Sigmoid colon (tissue), 7 donors: ENCODE measurements at regions of chr1 and their contacts with region 1.

Region 1: GRCh38 chr1:45303582-45304310 is 22.9 kb upstream of the HPDL start:
- DNase-seq: peak; percentile 99
- H3K4me3 ChIP-seq: peak overlapping the region; percentile 52 to 88 (median 72)
- H3K27ac ChIP-seq: peak overlapping the region; percentile 91 to 96 (median 92)
- H3K4me1 ChIP-seq: peaks cover 0 to 17% (median 11%) of the 10 kb centered on the region in 4 donors
- H3K27me3 ChIP-seq: no peaks in the 10 kb centered on the region
- CTCF ChIP-seq: peak; percentile 46 to 87 (median 70)
- EP300 ChIP-seq: no peak
- POLR2A ChIP-seq: peak in 1 of 2 donors; percentile 58

Region 2: GRCh38 chr1:44714944-44715571 is 588.7 kb before region 1 on chr1:
- intact Hi-C with region 1: loop called (anchors 10 kb)
- DNase-seq: peak; percentile 74
- H3K4me3 ChIP-seq: no peak overlapping the region
- H3K27ac ChIP-seq: no peak overlapping the region
- H3K4me1 ChIP-seq: peaks cover 0 to 7% (median 5%) of the 10 kb centered on the region in 4 donors
- H3K27me3 ChIP-seq: no peaks in the 10 kb centered on the region
- CTCF ChIP-seq: peak; percentile 53 to 91 (median 78)
- EP300 ChIP-seq: no peak
- POLR2A ChIP-seq: no peak

Region 3: GRCh38 chr1:44730741-44731512 is 572.8 kb before region 1 on chr1 and contains the start of gene RNU5D-1:
- intact Hi-C with region 1: loop called (anchors 5 kb)
- DNase-seq: peak; percentile 96
- H3K4me3 ChIP-seq: peak within 1 kb of the TSS in 3 of 4 donors; percentile 13 to 20 (median 14)
- H3K27ac ChIP-seq: peak within 1 kb of the TSS; percentile 77 to 88 (median 82)
- H3K4me1 ChIP-seq: peaks cover 0 to 8% (median 4%) of the 10 kb centered on the region in 4 donors
- H3K27me3 ChIP-seq: no peaks in the 10 kb centered on the region
- CTCF ChIP-seq: peak; percentile 39 to 85 (median 68)
- EP300 ChIP-seq: peak in 2 of 4 donors; percentile 10 to 20
- POLR2A ChIP-seq: peak; percentile 95
- total RNA-seq, gene RNU5D-1: not detected

Region 4: GRCh38 chr1:44842862-44843655 is 460.7 kb before region 1 on chr1 and contains the start of gene PTCH2:
- intact Hi-C with region 1: loop called (anchors 5 kb)
- DNase-seq: peak; percentile 93
- H3K4me3 ChIP-seq: peak within 1 kb of the TSS; percentile 54 to 77 (median 60)
- H3K27ac ChIP-seq: peak within 1 kb of the TSS; percentile 66 to 82 (median 76)
- H3K4me1 ChIP-seq: peaks cover 0 to 18% (median 6%) of the 10 kb centered on the region in 4 donors
- H3K27me3 ChIP-seq: no peaks in the 10 kb centered on the region
- CTCF ChIP-seq: no peak
- EP300 ChIP-seq: no peak
- POLR2A ChIP-seq: peak in 1 of 2 donors; percentile 17
- total RNA-seq, gene PTCH2: 0.36 to 2.8 (median 0.83) TPM

Region 5: DNA sequence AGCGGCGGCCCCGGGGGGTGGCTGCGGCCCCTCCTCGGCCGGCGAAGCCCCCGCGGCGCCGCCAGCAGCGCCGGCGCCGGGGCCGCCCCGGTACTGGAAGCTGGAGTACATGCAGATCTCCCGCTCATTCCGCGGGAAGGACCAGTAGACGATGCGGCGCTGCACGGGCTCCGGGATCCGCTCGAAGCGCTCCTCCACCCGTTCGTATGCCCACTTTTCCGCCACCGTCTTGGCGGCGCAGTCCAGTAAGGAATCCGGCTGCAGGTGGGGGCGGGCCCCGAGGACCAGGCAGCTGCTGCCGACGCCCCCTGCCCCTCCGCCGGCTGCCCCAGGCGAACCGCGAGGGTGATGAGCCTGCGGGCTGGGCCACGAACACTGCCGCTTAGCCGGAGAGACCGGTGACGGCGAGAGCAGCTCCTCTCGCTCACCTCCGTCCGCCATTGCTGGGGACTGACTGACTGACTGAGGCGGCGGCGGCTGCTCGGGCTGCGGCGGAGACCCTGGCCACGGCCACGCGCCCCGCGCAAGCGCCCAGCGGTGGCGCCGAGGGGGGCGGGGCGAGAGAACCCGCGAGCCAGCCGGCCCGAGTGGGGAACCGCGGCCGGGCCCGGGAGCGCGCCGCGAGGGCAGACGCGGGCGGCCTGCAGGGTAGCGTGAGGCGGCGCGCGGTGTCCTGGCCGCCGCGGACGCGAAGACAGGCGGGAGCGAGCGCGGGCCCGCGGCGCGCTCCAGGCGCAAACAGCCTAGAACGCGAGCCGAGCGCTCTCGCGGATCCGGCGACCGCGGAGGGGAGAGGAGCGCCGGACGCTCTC is 97.6 kb before region 1 on chr1 and contains the start of gene ZSWIM5:
- intact Hi-C with region 1: loop called (anchors 5 kb)
- DNase-seq: peak; percentile 81
- H3K4me3 ChIP-seq: peak within 1 kb of the TSS; percentile 75 to 96 (median 82)
- H3K27ac ChIP-seq: peak within 1 kb of the TSS; percentile 89 to 93 (median 92)
- H3K4me1 ChIP-seq: peaks cover 0 to 30% (median 11%) of the 10 kb centered on the region in 4 donors
- H3K27me3 ChIP-seq: no peaks in the 10 kb centered on the region
- CTCF ChIP-seq: no peak
- EP300 ChIP-seq: no peak
- POLR2A ChIP-seq: no peak
- total RNA-seq, gene ZSWIM5: 2.9 to 4.3 (median 3.3) TPM

Region 6: GRCh38 chr1:45339789-45340570 is 36.2 kb after region 1 on chr1 and contains the starts of genes MUTYH and TOE1:
- intact Hi-C with region 1: loop called (anchors 1 kb)
- DNase-seq: peak; percentile 96
- H3K4me3 ChIP-seq: peak within 1 kb of the TSS; percentile 67 to 88 (median 76)
- H3K27ac ChIP-seq: peak within 1 kb of the TSS; percentile 92 to 98 (median 96)
- H3K4me1 ChIP-seq: peaks cover 0 to 30% (median 28%) of the 10 kb centered on the region in 4 donors
- H3K27me3 ChIP-seq: no peaks in the 10 kb centered on the region
- CTCF ChIP-seq: no peak
- EP300 ChIP-seq: no peak
- POLR2A ChIP-seq: peak; percentile 58 to 60
- total RNA-seq, gene MUTYH: 15.7 to 22.8 (median 19.2) TPM
- total RNA-seq, gene TOE1: 7.1 to 10.5 (median 7.3) TPM

Region 7: DNA sequence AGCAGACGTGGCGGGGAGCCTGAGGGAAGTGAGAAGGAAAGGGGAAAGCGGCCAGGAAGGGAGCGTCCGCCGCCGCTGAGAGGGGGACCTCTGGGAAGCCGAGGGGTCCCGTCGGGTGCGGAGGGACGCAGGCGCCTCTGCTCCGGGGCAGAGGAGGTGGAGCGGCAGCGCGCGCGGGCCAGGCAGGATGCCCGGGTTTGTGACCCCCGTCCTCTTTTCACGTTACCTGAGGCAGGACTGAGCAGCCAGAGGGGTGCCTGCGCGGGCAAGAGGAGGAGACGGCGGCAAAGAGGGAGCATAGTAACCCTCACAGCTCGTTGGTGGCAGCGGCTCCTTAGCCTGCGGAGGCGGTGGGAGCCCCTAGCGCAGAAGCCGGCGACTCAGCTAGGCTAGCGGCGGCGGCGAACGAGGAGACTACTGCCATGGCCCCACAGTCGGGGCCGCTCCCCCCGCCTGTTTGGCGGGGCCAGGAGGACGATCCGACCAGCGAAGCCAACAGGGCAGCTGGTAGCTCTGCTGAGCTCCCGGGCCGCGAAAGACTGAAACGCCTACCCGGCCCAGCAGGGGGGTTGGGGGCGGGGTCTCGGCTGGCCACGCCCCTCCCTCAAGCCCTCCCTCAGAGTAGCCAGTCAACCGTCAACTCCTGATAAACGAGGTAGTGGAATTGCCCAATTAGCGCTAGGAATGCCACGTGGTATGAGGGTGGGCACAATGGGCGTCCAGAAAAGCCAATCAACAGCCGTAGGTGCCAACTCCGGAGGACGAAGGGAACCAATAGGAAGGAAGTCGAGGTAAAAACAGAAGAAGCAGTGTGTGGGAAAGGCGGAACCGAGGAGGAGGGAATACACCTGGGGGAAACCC is 187.1 kb after region 1 on chr1 and contains the start of gene TESK2:
- intact Hi-C with region 1: loop called (anchors 5 kb)
- DNase-seq: peak; percentile 99
- H3K4me3 ChIP-seq: peak within 1 kb of the TSS; percentile 84 to 95 (median 90)
- H3K27ac ChIP-seq: peak within 1 kb of the TSS; percentile 85 to 89 (median 87)
- H3K4me1 ChIP-seq: peaks cover 0 to 13% (median 10%) of the 10 kb centered on the region in 4 donors
- H3K27me3 ChIP-seq: no peaks in the 10 kb centered on the region
- CTCF ChIP-seq: peak in 2 of 4 experiments; percentile 15 to 29
- EP300 ChIP-seq: no peak
- POLR2A ChIP-seq: peak; percentile 55 to 92
- total RNA-seq, gene TESK2: 4.3 to 7.8 (median 7.0) TPM